ENCODE measurements at regions of chr4 and their contacts with region 1.

Region 1: DNA sequence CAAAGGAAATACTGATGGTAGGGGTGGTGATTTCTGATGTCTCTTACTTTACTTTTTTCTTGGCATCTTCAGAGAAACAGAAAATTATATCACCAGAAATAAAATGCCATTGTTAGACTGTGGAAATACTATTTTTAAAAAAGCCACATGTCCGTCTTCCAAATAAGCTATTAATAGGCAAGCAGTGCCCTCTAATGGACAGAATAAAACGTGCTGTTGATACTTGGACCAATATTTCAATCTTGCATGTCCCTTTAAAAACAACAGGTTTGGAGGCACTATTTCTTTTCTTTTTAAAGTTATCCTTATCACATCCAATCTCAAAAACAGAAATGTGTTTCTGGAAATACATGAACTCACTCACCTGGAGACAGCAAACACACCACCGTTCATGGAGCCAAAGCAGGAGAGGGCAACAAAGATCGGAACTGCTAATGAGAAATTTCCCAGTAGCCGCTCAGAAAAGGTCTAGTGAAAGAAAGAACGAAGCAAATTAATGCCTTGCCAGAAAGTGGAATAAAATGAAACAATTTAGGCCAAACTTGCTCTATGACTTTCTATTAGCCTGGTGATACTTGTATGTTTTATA is 59.2 kb downstream of the SLC7A11 start:
- DNase-seq: no peak
- H3K4me3 ChIP-seq: no peak overlapping the region
- H3K27ac ChIP-seq: no peak overlapping the region
- H3K4me1 ChIP-seq: no peaks in the 10 kb centered on the region
- H3K27me3 ChIP-seq: no peaks in the 10 kb centered on the region
- CTCF ChIP-seq: peak; percentile 40

Region 2: GRCh38 chr4:137819964-137820383 is 363.0 kb before region 1 on chr4:
- intact Hi-C with region 1: loop called (anchors 10 kb)
- DNase-seq: no peak
- H3K4me3 ChIP-seq: no peak overlapping the region
- H3K27ac ChIP-seq: no peak overlapping the region
- H3K4me1 ChIP-seq: no peaks in the 10 kb centered on the region
- H3K27me3 ChIP-seq: no peaks in the 10 kb centered on the region
- CTCF ChIP-seq: no peak

Region 3: DNA sequence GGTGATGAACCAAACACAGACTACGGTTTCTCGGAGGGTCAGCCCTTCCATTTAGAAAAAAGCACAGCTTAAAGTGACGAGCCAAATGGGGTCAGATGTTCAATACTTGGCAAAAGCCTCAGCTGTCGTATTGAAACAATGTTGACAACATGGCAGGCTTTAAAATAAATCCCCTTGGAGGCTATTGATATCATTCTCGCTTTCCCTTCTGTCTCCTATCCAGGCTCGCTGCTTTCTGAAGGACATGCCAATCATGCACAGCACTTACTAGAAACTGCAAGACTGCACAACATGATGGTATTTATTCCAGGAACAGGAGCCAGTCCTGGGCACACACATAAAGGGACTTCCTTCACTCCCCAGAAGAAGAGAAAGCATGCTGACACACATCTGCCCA is 78.7 kb before region 1 on chr4:
- intact Hi-C with region 1: no loop called
- DNase-seq: no peak
- H3K4me3 ChIP-seq: no peak overlapping the region
- H3K27ac ChIP-seq: no peak overlapping the region
- H3K4me1 ChIP-seq: no peaks in the 10 kb centered on the region
- H3K27me3 ChIP-seq: no peaks in the 10 kb centered on the region
- CTCF ChIP-seq: no peak

Region 4: GRCh38 chr4:138241281-138242075 is 58.5 kb after region 1 on chr4:
- intact Hi-C with region 1: no loop called
- DNase-seq: peak; percentile 35
- H3K4me3 ChIP-seq: peak overlapping the region; percentile 36
- H3K27ac ChIP-seq: peak overlapping the region; percentile 88
- H3K4me1 ChIP-seq: no peaks in the 10 kb centered on the region
- H3K27me3 ChIP-seq: no peaks in the 10 kb centered on the region
- CTCF ChIP-seq: no peak